OCI-LY7 (cell line): ENCODE measurements at regions of chr22 and their contacts with region 1.

Region 1: GRCh38 chr22:21771631-21771976 is 36.0 kb upstream of the YPEL1 start:
- DNase-seq: no peak
- H3K4me3 ChIP-seq: no peak overlapping the region
- H3K27ac ChIP-seq: peak overlapping the region; percentile 93
- H3K4me1 ChIP-seq: peaks cover 47% of the 10 kb centered on the region
- CTCF ChIP-seq: no peak

Region 2: GRCh38 chr22:21760640-21761039 is 11.0 kb before region 1 on chr22:
- CTCF ChIA-PET with region 1: interaction called, 4 read pairs
- POLR2A ChIA-PET with region 1: interaction called, 11 read pairs
- intact Hi-C with region 1: no loop called
- DNase-seq: no peak
- H3K4me3 ChIP-seq: no peak overlapping the region
- H3K27ac ChIP-seq: no peak overlapping the region
- H3K4me1 ChIP-seq: peaks cover 8% of the 10 kb centered on the region
- CTCF ChIP-seq: no peak

Region 3: DNA sequence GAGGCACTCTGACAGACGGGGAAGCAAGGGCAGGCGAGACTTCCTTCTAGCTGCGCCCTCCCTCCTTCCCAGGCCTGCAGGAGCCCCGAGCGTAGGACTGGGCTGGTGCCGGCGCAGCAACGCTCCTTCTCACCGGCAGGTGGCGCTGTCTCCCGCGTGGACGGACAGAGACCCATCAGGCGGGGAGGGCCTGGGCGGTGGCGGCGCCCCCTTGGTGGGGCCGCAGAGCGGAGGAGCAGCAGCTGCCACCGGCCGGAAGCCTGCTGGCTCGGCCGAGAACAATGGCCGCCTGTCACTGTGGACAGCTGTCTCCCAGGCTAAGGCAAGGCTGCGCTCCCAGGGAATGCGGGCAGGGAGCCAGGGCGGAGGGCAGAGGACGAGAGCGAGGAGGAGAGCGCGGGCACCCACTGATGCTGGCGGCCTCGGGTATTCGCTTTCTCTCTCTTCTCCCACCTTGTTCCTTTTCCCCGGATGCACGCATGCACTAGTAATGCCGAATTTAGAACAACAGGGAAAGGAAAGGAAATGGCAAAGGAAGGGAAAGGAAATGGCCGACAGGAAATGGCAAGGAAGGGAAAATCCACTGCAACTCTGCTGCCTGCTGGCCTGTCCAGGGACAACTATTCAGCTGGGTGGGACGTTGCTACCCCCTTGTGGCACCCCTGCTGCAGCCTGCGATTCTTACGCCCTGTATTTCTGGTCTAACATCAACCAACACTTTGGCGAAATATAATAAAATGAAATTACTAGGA is 166.6 kb after region 1 on chr22:
- CTCF ChIA-PET with region 1: no interaction called
- POLR2A ChIA-PET with region 1: no interaction called
- intact Hi-C with region 1: no loop called
- DNase-seq: peak; percentile 92
- H3K4me3 ChIP-seq: peak overlapping the region; percentile 67
- H3K27ac ChIP-seq: peak overlapping the region; percentile 46
- H3K4me1 ChIP-seq: peaks cover 28% of the 10 kb centered on the region
- CTCF ChIP-seq: peak; percentile 87